Naive thymus-derived CD8-positive, alpha-beta T cell (primary cell): ENCODE measurements at regions of chr14 and their contacts with region 1.

Region 1: GRCh38 chr14:49585803-49586672 is at the start of gene RPS29:
- DNase-seq: peak; percentile 87 to 99 (median 98)
- ATAC-seq: peak; percentile 85 to 87
- H3K4me3 Mint-ChIP-seq: peak within 1 kb of the TSS; percentile 89 to 99 (median 94)
- H3K27ac Mint-ChIP-seq: peak within 1 kb of the TSS; percentile 97 to 100 (median 99)
- H3K4me1 Mint-ChIP-seq: peaks cover 21 to 55% (median 46%) of the 10 kb centered on the region in 4 donors
- H3K27me3 Mint-ChIP-seq: peaks cover 0 to 9% (median 0%) of the 10 kb centered on the region in 5 donors
- polyA plus RNA-seq, gene RPS29: 11,853 to 13,490 (median 12,998) TPM

Region 2: DNA sequence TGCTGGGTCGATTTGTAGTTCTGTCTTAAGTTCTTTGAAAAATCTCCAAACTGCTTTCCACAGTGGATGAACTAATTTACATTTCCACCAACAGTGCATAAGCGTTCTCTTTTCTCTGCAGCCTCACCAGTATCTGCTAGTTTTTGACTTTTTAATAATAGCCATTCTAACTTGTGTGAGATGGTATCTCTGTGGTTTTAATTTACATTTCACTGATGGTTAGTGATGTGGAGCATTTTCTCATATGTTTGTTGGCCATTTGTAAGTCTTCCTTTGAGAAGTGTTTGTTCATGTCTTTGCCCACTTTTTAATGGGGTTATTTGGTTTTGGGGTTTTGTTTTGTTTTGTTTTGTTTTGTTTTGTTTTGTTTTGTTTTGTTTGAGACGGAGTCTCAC is 25.7 kb before region 1 on chr14:
- POLR2A ChIA-PET with region 1: no interaction called
- DNase-seq: no peak
- ATAC-seq: no peak
- H3K4me3 Mint-ChIP-seq: no peak overlapping the region
- H3K27ac Mint-ChIP-seq: no peak overlapping the region
- H3K4me1 Mint-ChIP-seq: no peaks in the 10 kb centered on the region
- H3K27me3 Mint-ChIP-seq: peaks cover 0 to 12% (median 4%) of the 10 kb centered on the region in 5 donors

Region 3: DNA sequence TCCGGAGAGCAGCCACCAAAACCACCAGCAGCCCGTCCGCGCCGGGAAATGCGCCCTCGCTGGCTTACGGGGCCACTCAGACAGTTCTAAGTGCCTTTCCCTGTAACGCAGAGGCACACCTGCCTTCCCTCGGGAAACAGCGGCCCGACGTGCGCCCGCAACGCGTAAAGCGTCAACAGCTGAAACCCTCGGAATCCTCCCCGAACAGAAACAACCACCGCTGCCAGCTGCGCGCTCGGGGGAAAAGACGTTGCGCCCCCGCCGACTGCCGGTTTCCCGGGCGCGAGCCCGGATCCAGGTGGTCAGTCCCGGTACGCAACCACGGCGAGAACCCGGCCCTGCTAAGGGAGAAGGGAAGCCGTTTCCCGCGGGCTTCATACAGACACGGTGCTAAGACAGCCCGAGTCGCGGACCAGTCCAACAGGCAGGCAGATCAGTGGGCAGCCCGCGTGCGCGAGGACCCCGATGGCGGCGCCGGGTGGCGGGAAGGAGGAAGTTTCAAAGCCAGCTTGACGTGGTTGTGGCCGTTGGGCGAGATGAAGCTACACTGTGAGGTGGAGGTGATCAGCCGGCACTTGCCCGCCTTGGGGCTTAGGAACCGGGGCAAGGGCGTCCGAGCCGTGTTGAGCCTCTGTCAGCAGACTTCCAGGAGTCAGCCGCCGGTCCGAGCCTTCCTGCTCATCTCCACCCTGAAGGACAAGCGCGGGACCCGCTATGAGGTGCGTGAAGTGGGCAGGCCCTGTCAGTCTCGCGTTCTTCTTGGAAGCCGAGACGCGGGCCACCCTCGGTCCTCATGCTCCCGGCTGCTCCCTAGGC is 12.7 kb after region 1 on chr14 and contains the start of gene LRR1:
- POLR2A ChIA-PET with region 1: interaction called, 83 read pairs
- DNase-seq: peak; percentile 72 to 96 (median 84)
- ATAC-seq: peak; percentile 77 to 82
- H3K4me3 Mint-ChIP-seq: peak within 1 kb of the TSS; percentile 94 to 99 (median 98)
- H3K27ac Mint-ChIP-seq: peak within 1 kb of the TSS; percentile 96 to 100 (median 98)
- H3K4me1 Mint-ChIP-seq: peaks cover 5 to 52% (median 31%) of the 10 kb centered on the region in 4 donors
- H3K27me3 Mint-ChIP-seq: no peaks in the 10 kb centered on the region
- polyA plus RNA-seq, gene LRR1: 8.5 to 10.4 (median 8.9) TPM

Region 4: DNA sequence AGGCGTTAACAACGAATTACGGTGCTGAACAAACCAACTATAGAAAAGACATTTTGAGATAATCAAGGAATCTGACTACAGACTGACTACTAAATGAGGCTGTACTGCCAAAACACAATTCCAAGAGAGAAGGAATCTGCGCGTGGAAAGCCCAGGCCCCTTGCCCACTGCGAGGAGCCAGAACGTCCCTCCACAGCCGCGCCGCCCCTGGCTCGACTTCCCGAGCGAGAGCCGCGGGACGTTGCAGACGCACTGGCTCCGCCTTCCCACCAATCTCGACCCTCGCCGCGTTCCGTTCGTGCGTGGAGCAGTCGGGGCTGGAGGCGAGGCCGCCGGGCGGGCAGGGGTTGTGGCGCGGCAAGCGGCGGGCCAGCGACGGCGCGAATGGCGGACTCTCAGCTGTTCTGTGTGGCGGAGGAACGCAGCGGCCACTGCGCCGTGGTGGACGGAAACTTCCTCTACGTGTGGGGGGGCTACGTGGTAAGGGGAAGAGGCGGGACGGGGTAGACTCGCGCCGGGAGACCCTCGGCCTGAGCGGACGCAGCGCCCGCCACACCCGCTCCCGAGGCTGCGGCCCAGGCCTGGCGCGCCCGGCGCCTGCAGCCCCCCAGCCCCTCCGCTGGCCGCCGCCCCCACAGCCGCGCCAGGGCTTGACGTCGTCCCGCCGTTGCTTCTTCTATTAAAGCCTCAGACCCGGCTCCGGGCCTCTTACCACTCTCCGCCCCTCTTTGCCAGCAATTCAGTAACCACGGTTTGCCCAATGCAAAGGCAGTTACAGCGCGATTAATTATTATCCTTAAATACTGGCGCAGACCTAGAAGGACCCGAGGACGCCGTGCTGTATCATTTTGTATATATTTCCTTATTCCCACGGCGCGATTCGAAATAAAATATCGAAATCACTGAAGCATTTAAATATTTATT is 107.0 kb after region 1 on chr14 and contains the start of gene KLHDC1:
- POLR2A ChIA-PET with region 1: interaction called, 12 read pairs
- DNase-seq: peak; percentile 67 to 88 (median 78)
- ATAC-seq: peak; percentile 87 to 91
- H3K4me3 Mint-ChIP-seq: peak within 1 kb of the TSS; percentile 74 to 94 (median 90)
- H3K27ac Mint-ChIP-seq: peak within 1 kb of the TSS; percentile 66 to 98 (median 93)
- H3K4me1 Mint-ChIP-seq: peaks cover 2 to 54% (median 40%) of the 10 kb centered on the region in 4 donors
- H3K27me3 Mint-ChIP-seq: no peaks in the 10 kb centered on the region
- polyA plus RNA-seq, gene KLHDC1: 2.6 to 9.0 (median 3.2) TPM